ENCODE measurements at regions of chr6 and their contacts with region 1.

Region 1: GRCh38 chr6:117317261-117317660 is 51.9 kb downstream of the VGLL2 start:
- DNase-seq: no peak
- ATAC-seq: no peak
- H3K4me3 ChIP-seq: no peak overlapping the region
- H3K27ac ChIP-seq: no peak overlapping the region
- H3K4me1 ChIP-seq: no peaks in the 10 kb centered on the region
- H3K27me3 ChIP-seq: no peaks in the 10 kb centered on the region
- CTCF ChIP-seq: peak; percentile 15 to 57 (median 36)

Region 2: DNA sequence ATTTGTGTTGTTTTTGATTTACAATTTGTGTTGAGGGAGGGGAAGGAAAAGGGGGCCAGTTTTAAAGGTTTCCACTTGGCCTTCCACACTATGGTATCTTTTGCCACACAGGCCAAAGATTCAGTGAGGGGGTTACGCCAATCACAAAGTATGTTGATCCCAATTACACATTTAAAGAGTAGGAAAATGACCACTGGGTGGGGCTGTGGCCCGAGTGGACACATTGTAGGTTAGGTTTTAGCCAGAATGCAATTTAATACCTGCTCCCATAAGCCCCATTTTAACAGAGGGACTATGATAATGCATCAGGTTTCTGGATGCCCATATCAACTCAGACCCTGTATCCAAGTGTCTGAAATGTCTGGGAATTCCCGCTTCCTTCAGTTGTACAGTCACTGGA is 36.3 kb before region 1 on chr6:
- intact Hi-C with region 1: loop called in 1 of 10 experiments (anchors 5 kb)
- DNase-seq: no peak
- ATAC-seq: peak in 1 of 8 donors; percentile 55
- H3K4me3 ChIP-seq: no peak overlapping the region
- H3K27ac ChIP-seq: no peak overlapping the region
- H3K4me1 ChIP-seq: no peaks in the 10 kb centered on the region
- H3K27me3 ChIP-seq: peaks cover 0 to 32% (median 21%) of the 10 kb centered on the region in 7 donors
- CTCF ChIP-seq: peak in 5 of 9 donors; percentile 29 to 37 (median 34)

Region 3: GRCh38 chr6:117389227-117390057 is 72.2 kb after region 1 on chr6:
- intact Hi-C with region 1: no loop called
- DNase-seq: no peak
- ATAC-seq: no peak
- H3K4me3 ChIP-seq: no peak overlapping the region
- H3K27ac ChIP-seq: no peak overlapping the region
- H3K4me1 ChIP-seq: no peaks in the 10 kb centered on the region
- H3K27me3 ChIP-seq: no peaks in the 10 kb centered on the region
- CTCF ChIP-seq: no peak

Region 4: GRCh38 chr6:117591405-117591804 is 274.1 kb after region 1 on chr6:
- intact Hi-C with region 1: no loop called
- DNase-seq: no peak
- ATAC-seq: peak in 3 of 8 donors; percentile 49 to 79 (median 52)
- H3K4me3 ChIP-seq: no peak overlapping the region
- H3K27ac ChIP-seq: peak overlapping the region in 3 of 10 donors; percentile 11 to 63 (median 23)
- H3K4me1 ChIP-seq: peaks cover 3 to 43% (median 22%) of the 10 kb centered on the region in 9 donors
- H3K27me3 ChIP-seq: no peaks in the 10 kb centered on the region
- CTCF ChIP-seq: no peak